ENCODE measurements at regions of chr12 and their contacts with region 1.

Region 1: GRCh38 chr12:42482445-42483237 is 106.9 kb downstream of the PRICKLE1 start:
- DNase-seq: peak; percentile 96
- H3K4me3 ChIP-seq: peak overlapping the region; percentile 65 to 78
- H3K27ac ChIP-seq: peak overlapping the region in 1 of 2 experiments; percentile 82; a peak in 1 of 4 replicates
- H3K4me1 ChIP-seq: peaks cover 0 to 14% of the 10 kb centered on the region in 2 experiments; a peak in 2 of 4 replicates
- H3K27me3 ChIP-seq: peaks cover 13% of the 10 kb centered on the region; the same call in 1 of the 2 replicates
- CTCF ChIP-seq: peak; percentile 78
- EP300 ChIP-seq: no peak
- RAD21 ChIP-seq: peak; percentile 83

Region 2: GRCh38 chr12:42396473-42397259 is 86.0 kb before region 1 on chr12:
- CTCF ChIA-PET with region 1: no interaction called
- POLR2A ChIA-PET with region 1: no interaction called
- DNase-seq: no peak
- H3K4me3 ChIP-seq: no peak overlapping the region
- H3K27ac ChIP-seq: no peak overlapping the region
- H3K4me1 ChIP-seq: no peaks in the 10 kb centered on the region
- H3K27me3 ChIP-seq: no peaks in the 10 kb centered on the region
- CTCF ChIP-seq: no peak
- EP300 ChIP-seq: no peak
- RAD21 ChIP-seq: no peak

Region 3: GRCh38 chr12:42469355-42470175 is 13.1 kb before region 1 on chr12:
- CTCF ChIA-PET with region 1: interaction called, 41 read pairs
- POLR2A ChIA-PET with region 1: no interaction called
- DNase-seq: no peak
- H3K4me3 ChIP-seq: no peak overlapping the region
- H3K27ac ChIP-seq: no peak overlapping the region
- H3K4me1 ChIP-seq: peaks cover 0 to 6% of the 10 kb centered on the region in 2 experiments; a peak in 2 of 4 replicates
- H3K27me3 ChIP-seq: no peaks in the 10 kb centered on the region
- CTCF ChIP-seq: no peak
- EP300 ChIP-seq: no peak
- RAD21 ChIP-seq: no peak

Region 4: GRCh38 chr12:42539696-42540095 is 57.1 kb after region 1 on chr12:
- CTCF ChIA-PET with region 1: interaction called, 10 read pairs
- POLR2A ChIA-PET with region 1: no interaction called
- DNase-seq: no peak
- H3K4me3 ChIP-seq: no peak overlapping the region
- H3K27ac ChIP-seq: no peak overlapping the region
- H3K4me1 ChIP-seq: no peaks in the 10 kb centered on the region; a peak in 2 of 4 replicates
- H3K27me3 ChIP-seq: no peaks in the 10 kb centered on the region
- CTCF ChIP-seq: no peak
- EP300 ChIP-seq: no peak
- RAD21 ChIP-seq: no peak

Region 5: DNA sequence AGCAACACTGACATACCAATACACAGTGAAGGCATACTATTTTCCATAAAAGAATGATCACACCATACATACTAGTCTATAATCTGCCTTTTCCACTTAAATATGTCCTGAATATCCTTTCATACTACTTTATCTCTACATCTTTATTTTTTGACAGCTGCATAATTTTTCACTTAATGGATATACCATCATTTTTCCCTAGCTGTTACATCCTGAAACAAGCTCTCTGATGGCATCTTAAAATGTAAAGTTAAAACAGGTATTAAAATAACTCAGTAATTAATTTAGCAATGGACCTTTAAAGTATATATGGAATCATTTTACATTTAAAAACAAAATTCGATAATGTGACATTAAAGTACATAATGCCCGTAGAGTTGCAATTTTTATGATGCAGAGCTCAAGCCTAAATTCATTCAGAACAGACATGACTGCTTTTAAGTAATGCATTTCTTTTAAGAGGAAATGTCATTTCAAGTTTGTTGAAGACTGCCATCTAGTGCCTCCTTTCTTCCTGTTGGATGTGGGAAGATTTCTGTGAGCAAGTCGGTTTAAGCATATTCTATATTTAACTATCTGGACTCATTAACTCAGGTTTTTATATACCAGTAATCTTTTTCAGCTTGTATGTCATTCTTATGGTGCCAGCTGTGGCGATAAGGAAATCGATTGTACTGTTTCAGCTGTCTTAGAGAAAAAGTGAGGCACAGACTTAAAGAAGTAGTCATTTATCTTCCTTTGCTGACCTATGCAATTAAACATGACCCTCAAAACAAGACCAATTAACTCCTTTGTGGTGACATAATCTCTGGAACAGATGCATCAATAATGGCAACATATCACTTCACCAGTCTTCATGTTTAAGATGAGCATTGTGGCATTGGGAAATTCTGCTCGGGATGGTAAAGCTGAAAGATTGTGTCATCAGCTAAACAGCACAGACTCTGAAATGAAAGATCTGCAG is 86.6 kb after region 1 on chr12:
- CTCF ChIA-PET with region 1: interaction called, 206 read pairs
- POLR2A ChIA-PET with region 1: interaction called, 8 read pairs
- DNase-seq: no peak
- H3K4me3 ChIP-seq: no peak overlapping the region
- H3K27ac ChIP-seq: no peak overlapping the region; a peak in 1 of 4 replicates
- H3K4me1 ChIP-seq: peaks cover 0 to 10% of the 10 kb centered on the region in 2 experiments; a peak in 2 of 4 replicates
- H3K27me3 ChIP-seq: no peaks in the 10 kb centered on the region
- CTCF ChIP-seq: peak; percentile 68
- EP300 ChIP-seq: no peak
- RAD21 ChIP-seq: peak; percentile 86

Region 6: DNA sequence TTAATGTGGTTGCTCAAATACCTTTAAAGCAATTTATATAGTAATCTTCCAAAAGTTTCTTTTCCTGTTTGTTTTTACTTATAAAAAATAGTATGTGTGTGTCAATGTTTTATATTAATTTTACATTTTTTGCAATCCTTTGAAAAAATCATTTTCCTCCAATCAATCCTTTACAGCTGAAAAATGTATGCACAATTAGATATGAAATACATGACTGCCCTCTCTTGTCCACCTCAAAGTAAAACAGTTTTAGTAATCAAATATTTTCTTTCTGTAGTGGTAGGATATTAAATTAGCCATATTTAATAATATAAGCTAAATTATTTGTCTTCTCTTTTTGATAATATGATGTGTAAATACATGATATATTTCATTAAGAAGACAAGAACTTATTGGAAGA is 799.5 kb after region 1 on chr12:
- CTCF ChIA-PET with region 1: interaction called, 54 read pairs
- POLR2A ChIA-PET with region 1: interaction called, 3 read pairs
- DNase-seq: peak; percentile 35
- H3K4me3 ChIP-seq: no peak overlapping the region
- H3K27ac ChIP-seq: no peak overlapping the region
- H3K4me1 ChIP-seq: peaks cover 5 to 7% of the 10 kb centered on the region in 2 experiments; a peak in 3 of 4 replicates
- H3K27me3 ChIP-seq: no peaks in the 10 kb centered on the region
- CTCF ChIP-seq: peak; percentile 51
- EP300 ChIP-seq: no peak
- RAD21 ChIP-seq: peak; percentile 85

Measured in SK-N-SH (cell line).